ENCODE measurements at regions of chr22 and their contacts with region 1.

Region 1: DNA sequence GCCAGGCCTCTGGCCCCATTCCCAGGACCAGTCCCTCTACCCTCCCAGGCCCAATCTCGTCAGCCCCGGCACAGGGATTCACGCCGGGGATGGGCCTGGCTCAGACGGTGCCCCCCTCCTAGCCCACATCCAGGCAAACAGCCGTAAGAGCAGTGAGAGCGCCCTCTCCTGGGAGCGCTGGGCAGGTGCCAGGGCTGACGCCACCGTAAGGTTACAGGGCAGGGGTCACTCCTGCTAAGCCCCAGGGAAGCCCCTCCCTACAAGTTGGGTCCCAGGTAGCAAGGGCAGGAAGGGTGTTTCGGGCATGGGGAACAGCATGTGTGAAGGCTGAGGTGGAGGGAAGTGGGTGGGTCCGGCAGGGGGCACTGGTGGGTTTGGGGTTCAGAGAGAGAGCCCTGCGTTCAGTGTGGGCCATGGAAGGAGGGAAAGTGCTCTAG is 19.2 kb upstream of the PPARA start:
- DNase-seq: no peak
- H3K4me3 ChIP-seq: no peak overlapping the region
- H3K27ac ChIP-seq: no peak overlapping the region
- H3K4me1 ChIP-seq: peaks cover 25% of the 10 kb centered on the region in 2 donors
- H3K27me3 ChIP-seq: no peaks in the 10 kb centered on the region
- CTCF ChIP-seq: peak in 1 of 6 experiments; percentile 14
- POLR2A ChIP-seq: no peak

Region 2: DNA sequence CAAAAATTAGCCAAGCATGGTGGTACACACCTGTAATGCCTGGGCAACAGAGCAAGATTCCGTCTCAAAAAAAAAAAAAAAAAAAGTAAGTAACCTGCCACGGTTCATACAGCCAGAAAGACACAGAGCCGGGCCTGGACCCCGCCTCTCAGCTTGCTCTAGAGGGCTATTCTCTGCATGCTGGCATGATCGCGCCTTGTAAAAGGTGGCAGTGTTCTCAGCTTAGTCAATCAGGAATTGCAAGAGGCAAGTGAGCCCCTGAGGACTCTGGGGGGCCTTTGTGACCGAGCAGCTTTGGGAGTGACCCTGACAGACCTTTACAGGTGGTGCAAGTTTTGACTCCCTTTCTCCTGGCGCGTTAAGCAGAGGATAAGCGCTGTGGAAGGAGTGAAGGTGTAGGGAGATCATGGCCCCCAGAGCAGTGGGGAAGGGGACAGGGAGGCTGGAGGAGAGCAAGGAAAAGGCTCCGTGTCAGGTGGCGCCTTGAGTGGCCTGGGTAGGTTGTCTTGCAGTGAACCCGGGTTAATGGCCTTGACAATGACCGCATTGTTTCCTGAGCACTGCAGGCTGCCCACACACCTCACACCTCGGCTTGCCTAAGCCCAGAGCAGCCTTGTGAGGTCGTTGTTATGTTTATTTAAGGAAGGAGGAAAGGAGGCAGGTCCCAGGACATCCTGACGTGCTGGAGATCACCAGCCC is 70.0 kb after region 1 on chr22:
- intact Hi-C with region 1: no loop called
- DNase-seq: peak in 5 of 7 donors; percentile 40 to 65 (median 59)
- H3K4me3 ChIP-seq: no peak overlapping the region
- H3K27ac ChIP-seq: peak overlapping the region in 2 of 5 donors; percentile 3 to 30
- H3K4me1 ChIP-seq: peaks cover 0 to 6% of the 10 kb centered on the region in 2 donors
- H3K27me3 ChIP-seq: no peaks in the 10 kb centered on the region
- CTCF ChIP-seq: no peak
- POLR2A ChIP-seq: no peak

Region 3: GRCh38 chr22:46296257-46297150 is 165.3 kb after region 1 on chr22 and contains the start of gene GTSE1:
- intact Hi-C with region 1: loop called in 1 of 2 experiments (anchors 10 kb)
- DNase-seq: peak; percentile 97 to 99 (median 98)
- H3K4me3 ChIP-seq: peak within 1 kb of the TSS in 3 of 4 donors; percentile 34 to 66 (median 39)
- H3K27ac ChIP-seq: peak within 1 kb of the TSS; percentile 61 to 96 (median 90)
- H3K4me1 ChIP-seq: peaks cover 15 to 17% of the 10 kb centered on the region in 2 donors
- H3K27me3 ChIP-seq: no peaks in the 10 kb centered on the region
- CTCF ChIP-seq: peak in 2 of 6 experiments; percentile 2 to 17
- POLR2A ChIP-seq: peak; percentile 48 to 74
- total RNA-seq, gene GTSE1: 0.06 to 5.7 (median 1.1) TPM

Measured in adrenal gland (tissue), 19 donors.